GM12878 (cell line): ENCODE measurements at regions of chr1 and their contacts with region 1.

Region 1: GRCh38 chr1:221741711-221742554 is at the start of gene DUSP10:
- DNase-seq: peak; percentile 97
- ATAC-seq: peak; percentile 75
- H3K4me3 ChIP-seq: peak within 1 kb of the TSS; percentile 90
- H3K27ac ChIP-seq: peak within 1 kb of the TSS; percentile 89
- H3K4me1 ChIP-seq: peaks cover 19% of the 10 kb centered on the region
- H3K27me3 ChIP-seq: no peaks in the 10 kb centered on the region
- CTCF ChIP-seq: peak in 2 of 3 experiments; percentile 9 to 46; a peak in 2 of 6 replicates
- EP300 ChIP-seq: no peak
- POLR2A ChIP-seq: peak; percentile 72
- RAD21 ChIP-seq: peak; percentile 47
- polyA plus RNA-seq, gene DUSP10: 20.3 to 32.1 TPM

Region 2: DNA sequence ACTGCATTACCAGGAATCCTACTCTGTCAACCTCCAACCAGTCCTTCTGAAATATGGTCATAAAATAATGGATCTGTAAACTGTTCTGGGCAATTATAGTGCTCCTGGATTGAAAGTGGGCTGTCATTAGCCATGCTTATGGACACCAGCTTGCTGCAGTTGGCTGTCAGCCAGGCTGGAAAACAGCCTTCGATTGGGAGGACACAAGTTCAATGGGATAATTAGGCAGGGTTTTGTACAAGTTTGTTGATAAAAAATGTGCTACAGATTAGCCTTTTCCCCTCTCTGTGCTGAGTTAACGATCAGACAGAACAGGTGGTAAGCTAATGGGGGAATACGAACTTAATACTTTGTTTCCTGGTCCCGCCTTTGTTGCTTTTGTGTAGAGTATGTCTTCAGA is 414.0 kb before region 1 on chr1:
- CTCF ChIA-PET with region 1: no interaction called
- POLR2A ChIA-PET with region 1: no interaction called
- RAD21 ChIA-PET with region 1: no interaction called
- SMC1A ChIA-PET with region 1: no interaction called
- in situ Hi-C with region 1: no loop called
- intact Hi-C with region 1: no loop called
- DNase-seq: no peak
- ATAC-seq: no peak
- H3K4me3 ChIP-seq: no peak overlapping the region
- H3K27ac ChIP-seq: no peak overlapping the region
- H3K4me1 ChIP-seq: no peaks in the 10 kb centered on the region
- H3K27me3 ChIP-seq: no peaks in the 10 kb centered on the region
- CTCF ChIP-seq: no peak
- EP300 ChIP-seq: no peak
- POLR2A ChIP-seq: no peak
- RAD21 ChIP-seq: no peak

Region 3: DNA sequence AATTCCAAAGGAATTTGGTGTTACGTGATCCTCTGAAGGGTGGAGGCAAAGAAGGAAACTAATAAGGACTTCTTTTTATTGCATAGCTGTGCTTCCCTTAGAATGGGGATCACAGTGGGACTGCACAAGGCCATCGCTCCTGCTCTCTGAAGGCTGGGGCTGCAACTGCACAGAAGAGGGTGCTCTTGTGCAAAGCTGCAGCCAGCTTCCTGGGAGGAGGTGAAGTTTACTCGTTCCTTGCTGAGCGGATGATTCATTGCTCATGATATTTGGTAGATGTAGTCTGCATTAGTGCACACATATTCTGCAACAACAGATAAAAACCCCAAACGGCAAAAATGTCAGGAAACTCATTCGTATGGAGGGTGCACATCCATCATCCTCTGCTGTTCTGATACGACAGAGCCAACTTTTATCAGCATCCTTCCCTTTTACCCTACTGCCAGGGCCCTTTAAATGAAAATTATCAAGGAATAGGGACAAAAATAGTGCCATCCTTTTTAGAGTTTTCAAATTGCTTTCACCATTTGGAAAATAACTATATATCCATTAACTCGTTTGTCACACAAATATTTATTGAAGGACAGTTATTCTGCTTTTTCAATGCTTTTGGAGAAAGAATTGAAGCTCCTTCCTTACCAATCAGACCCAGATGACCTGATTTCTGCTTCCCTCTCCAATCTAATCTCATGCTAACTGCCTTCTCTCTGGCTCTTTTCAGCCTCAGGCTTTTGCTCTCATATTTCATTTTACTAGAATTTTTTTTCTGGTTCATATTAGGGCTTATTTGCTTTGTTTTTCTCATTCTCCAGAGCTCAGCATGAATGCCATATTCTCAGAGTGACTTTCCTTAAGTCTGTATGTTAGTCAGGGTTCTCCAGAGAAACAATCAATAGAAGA is 263.6 kb before region 1 on chr1:
- CTCF ChIA-PET with region 1: interaction called, 22 read pairs
- POLR2A ChIA-PET with region 1: no interaction called
- RAD21 ChIA-PET with region 1: interaction called, 14 read pairs
- SMC1A ChIA-PET with region 1: interaction called, 10 read pairs
- in situ Hi-C with region 1: no loop called
- intact Hi-C with region 1: loop called (anchors 2 kb)
- DNase-seq: peak; percentile 36
- ATAC-seq: peak; percentile 100
- H3K4me3 ChIP-seq: no peak overlapping the region
- H3K27ac ChIP-seq: no peak overlapping the region
- H3K4me1 ChIP-seq: no peaks in the 10 kb centered on the region
- H3K27me3 ChIP-seq: no peaks in the 10 kb centered on the region; a peak in 1 of 4 replicates
- CTCF ChIP-seq: peak; percentile 76 to 95 (median 87); a peak in 5 of 6 replicates
- EP300 ChIP-seq: no peak
- POLR2A ChIP-seq: no peak
- RAD21 ChIP-seq: peak; percentile 92

Region 4: DNA sequence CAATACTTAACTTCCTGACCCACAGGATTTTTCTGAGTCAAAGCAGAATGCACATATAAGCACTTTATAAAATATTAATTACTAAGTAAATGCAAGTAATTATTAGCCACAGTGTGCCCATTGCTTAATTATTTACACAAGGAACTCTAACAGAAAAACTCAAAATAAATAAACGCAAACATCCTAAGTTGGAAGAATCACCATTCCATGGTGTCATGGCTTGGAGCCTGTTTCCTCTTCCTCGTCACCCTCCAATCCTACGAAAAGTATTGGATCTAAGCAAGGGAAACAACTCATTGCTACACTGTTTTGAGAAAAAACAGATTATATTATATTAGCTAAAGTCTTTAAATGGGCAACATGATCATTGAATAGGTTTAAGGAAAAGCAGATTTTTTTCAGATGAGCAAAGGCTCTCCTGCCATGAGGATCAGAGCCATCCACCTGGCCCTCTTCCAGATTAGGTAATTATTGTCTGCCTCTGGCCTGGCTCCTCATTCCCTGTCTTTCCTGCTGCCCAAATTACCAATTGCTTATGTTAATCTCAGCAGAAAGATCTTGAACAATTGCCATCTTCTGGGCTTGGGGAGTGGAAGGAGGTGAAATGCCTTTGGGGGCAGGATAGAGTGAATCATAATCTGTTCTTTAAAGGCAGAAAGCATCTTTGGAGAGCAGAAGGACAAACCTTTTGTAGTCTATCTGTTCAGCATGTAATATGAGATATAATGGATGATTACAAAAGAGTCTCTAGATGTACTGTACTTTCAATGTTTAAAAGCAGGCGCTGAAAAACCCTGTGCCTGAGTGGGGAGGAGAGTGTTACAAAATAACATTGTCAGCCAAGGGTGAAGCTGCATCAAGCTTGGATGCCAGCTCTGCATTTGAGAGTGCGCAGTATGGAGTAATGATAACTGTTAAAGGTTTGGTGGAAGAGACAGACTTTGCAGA is 121.2 kb before region 1 on chr1:
- CTCF ChIA-PET with region 1: no interaction called
- POLR2A ChIA-PET with region 1: no interaction called
- RAD21 ChIA-PET with region 1: no interaction called
- SMC1A ChIA-PET with region 1: no interaction called
- in situ Hi-C with region 1: no loop called
- intact Hi-C with region 1: no loop called
- DNase-seq: no peak
- ATAC-seq: no peak
- H3K4me3 ChIP-seq: no peak overlapping the region
- H3K27ac ChIP-seq: no peak overlapping the region
- H3K4me1 ChIP-seq: no peaks in the 10 kb centered on the region
- H3K27me3 ChIP-seq: no peaks in the 10 kb centered on the region
- CTCF ChIP-seq: no peak
- EP300 ChIP-seq: no peak
- POLR2A ChIP-seq: no peak
- RAD21 ChIP-seq: no peak

Region 5: DNA sequence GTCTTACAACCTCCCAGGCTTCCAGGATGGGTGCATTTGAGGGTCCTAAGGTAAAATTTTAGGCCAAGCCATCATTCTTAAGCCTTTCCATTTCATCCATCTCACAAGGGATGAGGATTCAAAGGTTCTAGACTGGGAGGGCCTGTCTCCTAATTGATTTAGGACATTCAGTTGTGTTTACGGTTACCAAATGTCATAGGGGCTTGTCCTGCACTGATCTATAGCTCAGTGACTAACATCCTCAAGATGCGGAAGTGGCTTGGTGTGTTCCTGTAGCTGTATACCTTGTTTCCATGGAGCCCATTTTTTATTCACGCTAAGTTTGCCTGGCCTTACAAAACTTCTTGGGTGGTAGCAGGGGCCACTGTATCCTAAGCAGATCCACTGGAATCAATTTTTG is 52.8 kb before region 1 on chr1:
- CTCF ChIA-PET with region 1: interaction called, 3 read pairs
- POLR2A ChIA-PET with region 1: interaction called, 6 read pairs
- RAD21 ChIA-PET with region 1: interaction called, 3 read pairs
- SMC1A ChIA-PET with region 1: interaction called, 12 read pairs
- in situ Hi-C with region 1: no loop called
- intact Hi-C with region 1: no loop called
- DNase-seq: no peak
- ATAC-seq: no peak
- H3K4me3 ChIP-seq: no peak overlapping the region
- H3K27ac ChIP-seq: no peak overlapping the region
- H3K4me1 ChIP-seq: peaks cover 3% of the 10 kb centered on the region; the same call in 1 of the 2 replicates
- H3K27me3 ChIP-seq: no peaks in the 10 kb centered on the region
- CTCF ChIP-seq: no peak
- EP300 ChIP-seq: no peak
- POLR2A ChIP-seq: no peak
- RAD21 ChIP-seq: no peak

Region 6: GRCh38 chr1:221753828-221754188 is 11.9 kb after region 1 on chr1:
- CTCF ChIA-PET with region 1: interaction called, 13 read pairs
- POLR2A ChIA-PET with region 1: interaction called, 99 read pairs
- RAD21 ChIA-PET with region 1: interaction called, 189 read pairs
- SMC1A ChIA-PET with region 1: interaction called, 211 read pairs
- in situ Hi-C with region 1: no loop called
- intact Hi-C with region 1: loop called (anchors 1 kb)
- DNase-seq: no peak
- ATAC-seq: peak; percentile 58
- H3K4me3 ChIP-seq: no peak overlapping the region
- H3K27ac ChIP-seq: peak overlapping the region; percentile 73
- H3K4me1 ChIP-seq: peaks cover 49% of the 10 kb centered on the region
- H3K27me3 ChIP-seq: no peaks in the 10 kb centered on the region
- CTCF ChIP-seq: no peak
- EP300 ChIP-seq: no peak
- POLR2A ChIP-seq: no peak
- RAD21 ChIP-seq: no peak

Region 7: GRCh38 chr1:221794079-221794670 is 52.2 kb after region 1 on chr1:
- CTCF ChIA-PET with region 1: interaction called, 4 read pairs
- POLR2A ChIA-PET with region 1: interaction called, 9 read pairs
- RAD21 ChIA-PET with region 1: interaction called, 11 read pairs
- SMC1A ChIA-PET with region 1: interaction called, 13 read pairs
- in situ Hi-C with region 1: no loop called
- intact Hi-C with region 1: no loop called
- DNase-seq: peak; percentile 82
- ATAC-seq: peak; percentile 90
- H3K4me3 ChIP-seq: no peak overlapping the region
- H3K27ac ChIP-seq: peak overlapping the region; percentile 69
- H3K4me1 ChIP-seq: peaks cover 25% of the 10 kb centered on the region
- H3K27me3 ChIP-seq: no peaks in the 10 kb centered on the region
- CTCF ChIP-seq: no peak
- EP300 ChIP-seq: peak; percentile 88 to 93; a peak in 3 of 4 replicates
- POLR2A ChIP-seq: no peak; the same call in 1 of the 2 replicates
- RAD21 ChIP-seq: no peak

Region 8: GRCh38 chr1:221994274-221994698 is 252.4 kb after region 1 on chr1:
- CTCF ChIA-PET with region 1: no interaction called
- POLR2A ChIA-PET with region 1: interaction called, 6 read pairs
- RAD21 ChIA-PET with region 1: interaction called, 8 read pairs
- SMC1A ChIA-PET with region 1: interaction called, 13 read pairs
- in situ Hi-C with region 1: no loop called
- intact Hi-C with region 1: loop called (anchors 5 kb)
- DNase-seq: peak; percentile 38
- ATAC-seq: peak; percentile 69
- H3K4me3 ChIP-seq: no peak overlapping the region
- H3K27ac ChIP-seq: no peak overlapping the region
- H3K4me1 ChIP-seq: peaks cover 17% of the 10 kb centered on the region
- H3K27me3 ChIP-seq: no peaks in the 10 kb centered on the region
- CTCF ChIP-seq: no peak
- EP300 ChIP-seq: no peak; a peak in 1 of 4 replicates
- POLR2A ChIP-seq: no peak
- RAD21 ChIP-seq: no peak